Posterior vena cava (tissue), 2 donors: ENCODE measurements at regions of chr7 and their contacts with region 1.

Region 1: DNA sequence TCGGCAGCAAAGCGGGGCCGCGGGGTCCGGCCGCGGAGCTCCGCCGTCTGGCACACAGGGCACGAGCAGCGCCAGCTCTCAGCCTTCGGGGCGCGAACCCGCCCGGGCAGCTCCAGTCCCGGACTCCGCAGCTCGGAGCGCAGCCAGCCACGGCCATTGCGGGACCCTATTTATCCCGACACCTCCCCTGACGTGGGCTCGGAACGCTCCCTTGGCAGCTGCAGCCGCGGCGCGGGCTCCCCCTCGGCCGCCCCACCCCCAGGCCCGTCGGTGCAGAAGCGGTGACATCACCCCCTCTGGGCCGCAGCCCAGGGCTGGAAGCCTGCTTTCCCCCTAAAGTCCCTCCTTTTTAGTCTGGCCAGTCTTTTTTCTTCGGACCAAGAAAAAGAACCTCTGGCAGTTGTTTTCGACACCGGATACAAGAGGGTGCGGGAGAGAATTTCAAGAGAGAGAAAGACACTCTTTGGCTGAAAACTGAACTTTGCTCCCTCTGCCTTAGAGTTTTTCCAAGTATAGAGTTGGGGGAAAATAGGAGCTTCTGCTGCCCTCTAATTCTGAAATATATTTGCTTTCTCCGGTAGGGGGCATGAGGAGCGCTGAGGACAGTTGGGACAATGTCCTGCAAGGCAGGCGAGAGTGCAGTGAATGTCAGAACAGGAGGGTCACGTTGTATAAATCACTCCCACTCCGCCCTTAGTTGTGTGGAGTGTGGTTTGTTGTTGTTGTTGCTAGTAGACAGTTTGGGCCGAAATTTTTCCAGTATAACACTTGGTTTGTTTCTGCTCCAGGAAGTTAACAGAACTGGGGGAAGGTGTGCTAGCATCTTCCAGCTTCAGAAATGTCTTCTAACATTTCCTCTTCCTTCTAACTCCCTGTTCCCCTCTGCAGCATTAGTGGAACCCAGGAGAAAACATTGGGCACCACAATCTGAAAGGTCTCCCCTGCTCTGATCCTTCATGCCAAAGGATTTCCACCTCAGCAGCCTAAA is at the start of gene SFRP4:
- DNase-seq: peak; percentile 91
- total RNA-seq, gene SFRP4: 56.7 to 197 TPM

Region 2: DNA sequence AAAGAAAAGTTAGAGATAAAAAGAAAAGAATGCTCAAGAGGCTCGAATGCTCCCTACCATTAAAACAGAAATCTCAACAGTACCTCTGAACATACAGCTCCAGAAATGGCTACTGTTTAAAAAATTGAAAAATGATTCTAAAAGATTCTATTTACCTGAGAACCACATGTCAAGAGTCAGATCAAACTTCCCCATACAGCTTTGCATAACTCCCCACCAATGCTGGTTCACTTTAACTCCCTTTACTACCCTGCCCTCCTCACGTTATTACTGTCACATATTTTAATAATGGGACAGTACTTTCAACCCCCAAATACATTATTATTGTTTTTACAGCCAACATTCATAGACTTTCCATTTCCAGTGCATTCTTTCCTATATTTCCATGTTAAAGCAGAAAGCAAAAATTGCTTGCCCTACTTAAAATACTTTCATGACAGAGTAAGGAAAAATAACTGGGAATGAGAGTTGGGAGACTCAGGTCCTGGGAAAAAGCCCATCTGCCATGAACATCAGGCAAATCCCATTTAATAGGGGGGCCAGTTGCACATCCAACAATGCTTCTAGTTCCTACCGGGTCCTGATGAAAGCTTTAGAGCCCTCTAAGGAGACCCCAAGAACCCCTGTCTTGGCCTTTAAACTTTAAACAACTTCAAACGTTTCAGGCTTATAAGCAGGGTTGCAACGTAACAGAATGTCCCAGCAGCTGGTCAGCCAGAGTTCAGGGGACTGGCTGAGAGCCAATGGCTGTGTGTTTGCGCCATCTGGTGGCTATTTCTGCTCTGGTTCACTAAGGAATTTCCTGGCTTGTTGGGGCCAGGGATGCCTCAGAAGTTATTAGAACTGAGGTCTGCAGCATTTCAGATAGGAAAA is 715.7 kb before region 1 on chr7:
- intact Hi-C with region 1: no loop called
- DNase-seq: peak; percentile 91

Region 3: DNA sequence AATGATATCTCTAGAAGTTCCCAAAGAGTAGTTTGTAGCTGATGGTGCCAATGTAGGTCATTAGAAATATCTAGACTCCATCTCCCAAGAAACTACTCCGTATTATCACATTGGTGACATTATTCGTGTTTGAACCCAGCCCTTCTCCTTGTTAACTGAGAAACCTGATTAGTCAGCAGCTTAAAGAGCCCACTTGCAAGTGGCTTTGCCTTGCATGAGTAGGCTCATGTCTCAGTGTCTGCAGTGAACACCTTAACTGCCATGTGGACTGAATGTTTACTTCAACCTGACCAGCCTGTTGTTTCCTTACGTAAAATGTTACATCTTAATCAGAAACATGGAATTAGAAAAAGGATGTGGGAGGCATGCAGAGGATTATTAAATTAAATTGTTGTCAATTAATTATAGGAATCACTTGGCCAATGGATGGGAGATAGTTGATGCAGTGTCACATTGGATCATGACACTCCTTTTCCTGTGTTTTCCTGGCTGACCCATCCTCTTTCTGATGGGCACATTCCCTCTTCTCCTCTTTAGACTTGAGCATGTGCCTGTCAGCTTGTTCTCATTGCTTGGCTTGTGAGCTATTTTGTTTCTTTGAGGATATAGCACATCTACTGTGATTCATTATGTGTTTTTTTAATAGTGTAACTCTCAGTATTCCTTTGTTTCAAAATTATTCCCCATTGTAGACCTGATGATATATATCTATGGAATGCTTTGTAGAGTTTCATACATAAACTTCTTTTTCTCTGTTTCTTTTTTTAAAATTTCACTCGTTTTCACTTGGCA is 279.0 kb after region 1 on chr7:
- intact Hi-C with region 1: loop called in 1 of 2 experiments (anchors 10 kb)
- DNase-seq: no peak

Region 4: GRCh38 chr7:38222481-38223096 is 305.6 kb after region 1 on chr7:
- intact Hi-C with region 1: loop called in 1 of 2 experiments (anchors 5 kb)
- DNase-seq: no peak